ENCODE measurements at regions of chr11 and their contacts with region 1.

Region 1: DNA sequence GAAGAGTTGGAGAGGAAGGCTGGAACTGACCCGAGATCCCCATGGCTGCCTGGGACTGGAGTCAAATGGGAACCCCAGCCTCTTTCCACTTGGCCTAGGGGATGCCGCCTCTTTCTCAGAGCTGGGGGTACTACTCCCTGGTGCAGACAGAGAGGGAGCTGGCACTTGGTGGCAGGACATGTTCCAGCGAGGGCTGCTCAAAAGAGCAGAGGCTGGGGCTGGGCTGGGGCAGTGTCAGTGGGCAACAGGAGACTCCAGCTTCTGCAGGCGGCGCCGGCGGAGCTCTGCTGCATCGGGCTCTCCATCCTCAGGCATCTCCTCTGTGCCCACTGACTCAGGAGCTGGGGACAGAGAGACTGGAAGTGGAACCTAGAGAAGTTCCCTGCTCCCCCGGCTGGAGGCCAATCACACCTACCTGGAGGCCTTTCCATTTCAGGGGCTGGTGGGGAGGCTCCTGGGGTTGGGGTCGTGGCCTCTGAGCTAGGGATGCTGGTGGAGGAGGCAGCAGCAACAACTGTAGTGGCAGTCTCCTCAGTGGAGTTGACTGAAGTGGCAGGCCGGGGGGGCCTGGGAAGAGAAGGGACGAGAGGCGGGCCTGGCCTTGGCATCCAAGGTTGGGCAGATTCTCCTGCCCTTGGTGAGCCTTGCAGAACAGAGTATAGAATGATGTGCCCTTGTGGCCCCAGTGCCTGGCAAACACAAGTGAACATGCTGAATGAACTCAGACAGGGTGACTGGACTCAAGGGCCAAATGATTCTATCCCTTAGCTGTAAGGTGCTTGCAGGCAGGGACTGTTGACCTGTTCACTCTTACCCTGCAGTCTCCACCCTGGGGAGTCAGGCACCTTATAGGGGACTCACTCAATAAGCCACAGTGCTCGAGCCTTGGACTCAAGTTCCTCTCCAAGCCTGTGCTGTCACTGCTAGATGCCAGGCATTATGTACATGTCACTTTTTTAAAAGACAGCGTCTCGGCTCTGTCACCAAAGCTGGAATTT is 5.9 kb downstream of the SYVN1 start:
- DNase-seq: no peak
- H3K4me3 ChIP-seq: no peak overlapping the region
- CTCF ChIP-seq: no peak

Region 2: GRCh38 chr11:65117216-65118096 is 11.0 kb before region 1 on chr11 and contains the start of gene ZNHIT2:
- CTCF ChIA-PET with region 1: interaction called, 11 read pairs
- POLR2A ChIA-PET with region 1: interaction called, 20 read pairs
- DNase-seq: peak; percentile 84
- H3K4me3 ChIP-seq: peak within 1 kb of the TSS; percentile 94
- CTCF ChIP-seq: peak; percentile 87

Region 3: GRCh38 chr11:65148657-65149056 is 20.2 kb after region 1 on chr11:
- CTCF ChIA-PET with region 1: no interaction called
- POLR2A ChIA-PET with region 1: no interaction called
- DNase-seq: no peak
- H3K4me3 ChIP-seq: no peak overlapping the region
- CTCF ChIP-seq: no peak

Region 4: GRCh38 chr11:65169164-65169641 is 40.8 kb after region 1 on chr11:
- CTCF ChIA-PET with region 1: no interaction called
- POLR2A ChIA-PET with region 1: no interaction called
- DNase-seq: no peak
- H3K4me3 ChIP-seq: no peak overlapping the region
- CTCF ChIP-seq: no peak

Measured in AG04449 (cell line).